ENCODE measurements at regions of chr2 and their contacts with region 1.

Region 1: DNA sequence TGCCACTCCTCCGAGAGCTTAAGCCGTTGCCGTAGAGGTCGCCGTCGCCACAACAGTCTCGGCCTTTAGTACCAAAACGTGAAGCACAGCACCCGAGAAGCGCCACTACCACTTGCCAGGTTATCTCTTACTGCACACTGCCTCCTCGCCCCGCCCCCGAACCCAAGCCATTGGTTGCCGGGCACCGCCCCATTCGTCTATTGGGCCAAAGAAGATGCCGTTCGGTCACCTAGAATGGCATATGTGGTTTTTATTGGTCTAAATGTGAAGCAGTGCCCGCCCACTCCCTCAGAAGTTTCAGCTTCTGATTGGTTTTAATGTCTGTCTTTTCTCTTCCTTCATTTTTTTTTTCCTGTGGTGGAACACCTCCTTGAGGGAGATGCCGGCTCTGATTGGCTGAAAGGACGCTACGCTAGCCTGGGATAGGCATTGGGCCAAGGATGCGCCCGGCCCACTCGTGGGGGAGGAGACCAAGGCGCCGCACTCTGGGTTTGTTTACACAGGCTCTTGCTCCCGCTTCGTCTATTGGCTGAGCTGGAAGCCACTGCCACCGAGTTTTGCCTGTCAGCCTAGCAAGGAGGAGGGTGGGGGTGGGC is at the start of gene PAIP2B:
- DNase-seq: peak; percentile 98 to 99 (median 99)
- ATAC-seq: peak; percentile 95 to 98 (median 96)
- H3K4me3 ChIP-seq: peak within 1 kb of the TSS; percentile 64 to 91 (median 82)
- H3K27ac ChIP-seq: peak within 1 kb of the TSS; percentile 85 to 97 (median 94)
- H3K4me1 ChIP-seq: peaks cover 0 to 16% (median 7%) of the 10 kb centered on the region in 12 donors
- H3K27me3 ChIP-seq: peaks cover 0 to 5% (median 0%) of the 10 kb centered on the region in 9 donors
- CTCF ChIP-seq: no peak
- POLR2A ChIP-seq: peak; percentile 76 to 88
- total RNA-seq, gene PAIP2B: 38.3 to 89.0 (median 53.2) TPM

Region 2: DNA sequence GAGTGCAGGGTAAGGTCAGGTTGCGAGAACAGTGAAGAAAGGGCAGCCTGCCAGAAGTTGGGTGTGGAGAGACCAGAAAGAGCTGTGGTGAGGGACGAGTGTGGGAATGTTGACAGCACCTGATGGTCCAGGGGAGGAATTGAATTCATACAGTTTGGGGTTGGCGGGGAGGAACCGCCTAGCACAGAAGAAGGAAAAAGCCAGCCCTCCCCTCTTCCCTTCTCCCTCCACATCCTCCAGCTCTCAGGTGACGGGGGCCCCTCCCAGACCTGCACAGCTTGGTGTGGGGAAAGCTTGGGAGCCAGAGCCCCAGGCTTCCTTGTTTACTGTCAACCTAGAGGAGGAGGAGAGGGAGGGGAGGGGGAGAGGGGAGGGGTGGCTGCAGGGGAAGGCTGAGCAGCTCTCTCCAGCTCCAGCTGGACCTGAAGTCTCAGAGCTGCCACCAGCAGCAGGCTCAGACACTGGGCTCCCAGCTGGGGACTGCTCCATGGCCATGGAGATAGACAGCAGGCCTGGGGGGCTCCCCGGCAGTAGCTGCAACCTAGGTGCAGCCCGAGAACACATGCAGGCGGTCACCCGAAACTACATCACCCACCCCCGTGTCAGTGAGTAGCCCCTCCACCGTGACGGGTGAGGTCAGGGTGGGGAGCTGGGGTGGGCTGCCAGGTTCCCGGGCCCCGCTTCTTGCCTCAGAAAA is 291.4 kb before region 1 on chr2 and contains the start of gene ATP6V1B1:
- intact Hi-C with region 1: no loop called
- DNase-seq: no peak
- ATAC-seq: peak in 1 of 4 donors; percentile 5
- H3K4me3 ChIP-seq: no peak within 1 kb of the TSS
- H3K27ac ChIP-seq: no peak within 1 kb of the TSS
- H3K4me1 ChIP-seq: no peaks in the 10 kb centered on the region
- H3K27me3 ChIP-seq: peaks cover 0 to 17% (median 4%) of the 10 kb centered on the region in 9 donors
- CTCF ChIP-seq: no peak
- POLR2A ChIP-seq: no peak
- total RNA-seq, gene ATP6V1B1: 0.16 to 0.60 (median 0.48) TPM in 5 of 9 donors, not detected in the others

Region 3: GRCh38 chr2:71243634-71244304 is 16.7 kb after region 1 on chr2:
- intact Hi-C with region 1: loop called in 1 of 10 experiments (anchors 2 kb)
- DNase-seq: peak in 4 of 5 donors; percentile 68 to 87 (median 80)
- ATAC-seq: peak; percentile 95 to 97 (median 96)
- H3K4me3 ChIP-seq: no peak overlapping the region
- H3K27ac ChIP-seq: peak overlapping the region in 10 of 12 donors; percentile 31 to 79 (median 72)
- H3K4me1 ChIP-seq: peaks cover 0 to 39% (median 7%) of the 10 kb centered on the region in 12 donors
- H3K27me3 ChIP-seq: no peaks in the 10 kb centered on the region
- CTCF ChIP-seq: no peak
- POLR2A ChIP-seq: no peak

Region 4: GRCh38 chr2:71317060-71317459 is 90.0 kb after region 1 on chr2:
- intact Hi-C with region 1: no loop called
- DNase-seq: no peak
- ATAC-seq: no peak
- H3K4me3 ChIP-seq: no peak overlapping the region
- H3K27ac ChIP-seq: no peak overlapping the region
- H3K4me1 ChIP-seq: peaks cover 0 to 4% (median 0%) of the 10 kb centered on the region in 12 donors
- H3K27me3 ChIP-seq: no peaks in the 10 kb centered on the region
- CTCF ChIP-seq: no peak
- POLR2A ChIP-seq: no peak

Region 5: DNA sequence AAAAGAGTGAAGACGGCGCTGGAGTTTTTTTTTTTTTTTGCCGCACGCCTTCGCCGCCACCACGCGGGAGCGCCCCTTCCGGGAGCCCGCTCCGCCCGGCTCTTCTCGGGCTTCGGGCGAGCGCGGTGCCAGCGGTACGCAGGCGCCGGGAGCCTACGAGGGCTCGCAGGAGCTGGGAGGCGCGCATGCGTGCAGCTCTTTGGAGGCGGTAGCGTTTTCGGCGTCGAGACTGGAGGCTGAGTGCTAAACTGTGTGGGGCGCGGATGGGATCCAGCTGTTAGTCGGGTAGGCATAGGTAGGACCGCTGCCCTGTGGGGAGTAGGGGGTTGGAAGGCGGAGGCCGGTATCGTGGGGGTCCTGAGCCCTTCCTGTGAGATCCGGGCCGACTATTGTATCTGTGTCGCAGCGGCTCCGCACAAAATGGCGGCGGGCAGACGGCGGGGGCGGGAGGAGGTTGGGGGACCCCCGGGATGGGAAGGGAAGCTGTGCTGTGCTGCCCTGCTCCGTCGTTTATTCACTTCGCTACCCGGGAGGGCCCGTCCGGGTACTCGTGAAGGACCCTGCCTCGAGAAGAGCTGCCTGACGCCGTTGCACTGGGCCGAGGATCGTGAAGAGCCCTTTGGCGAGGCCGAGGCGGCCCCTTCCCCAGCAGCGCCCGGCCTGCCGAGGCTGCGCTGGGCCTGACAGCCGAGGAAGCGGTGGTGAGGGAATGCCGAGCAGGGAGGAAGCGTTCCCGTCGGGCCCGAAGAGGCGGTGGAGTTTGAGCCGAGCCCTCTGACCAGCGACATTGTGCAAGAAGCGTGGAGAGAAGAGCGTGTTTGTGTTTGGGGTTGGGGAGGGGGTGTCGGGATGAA is 104.7 kb after region 1 on chr2 and contains the start of gene ZNF638:
- intact Hi-C with region 1: loop called in 9 of 10 experiments (anchors 1 to 10 kb)
- DNase-seq: peak; percentile 94 to 97 (median 96)
- ATAC-seq: peak; percentile 98 to 99 (median 98)
- H3K4me3 ChIP-seq: peak within 1 kb of the TSS; percentile 64 to 99 (median 91)
- H3K27ac ChIP-seq: peak within 1 kb of the TSS; percentile 72 to 96 (median 92)
- H3K4me1 ChIP-seq: peaks cover 0 to 48% (median 37%) of the 10 kb centered on the region in 12 donors
- H3K27me3 ChIP-seq: no peaks in the 10 kb centered on the region
- CTCF ChIP-seq: peak; percentile 72 to 95 (median 85)
- POLR2A ChIP-seq: peak in 1 of 2 donors; percentile 80
- total RNA-seq, gene ZNF638: 61.1 to 100 (median 84.1) TPM

Region 6: DNA sequence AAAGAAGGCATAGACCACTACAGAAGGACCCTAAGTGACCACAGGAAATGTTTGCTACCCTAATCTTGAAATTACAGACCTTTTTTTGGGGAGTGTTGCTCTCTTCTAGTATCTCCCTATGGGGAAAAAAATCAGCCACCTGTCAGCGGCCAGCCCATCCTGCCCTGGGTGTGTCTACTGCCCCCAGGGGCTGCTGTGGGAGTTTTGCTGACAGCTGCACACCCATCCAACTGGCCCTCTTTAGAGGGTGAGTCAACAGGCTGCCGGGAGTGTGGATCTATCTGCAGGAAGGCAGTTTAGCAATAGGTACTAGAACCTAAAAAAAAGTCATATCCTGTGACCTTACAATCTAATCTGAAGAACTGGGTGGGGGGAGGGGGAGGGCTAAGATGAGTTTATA is 225.5 kb after region 1 on chr2:
- intact Hi-C with region 1: loop called in 2 of 10 experiments (anchors 10 kb)
- DNase-seq: peak in 4 of 5 donors; percentile 55 to 82 (median 60)
- ATAC-seq: peak; percentile 54 to 65 (median 58)
- H3K4me3 ChIP-seq: peak overlapping the region in 7 of 12 donors; percentile 57 to 77 (median 63)
- H3K27ac ChIP-seq: peak overlapping the region; percentile 58 to 92 (median 90)
- H3K4me1 ChIP-seq: peaks cover 0 to 67% (median 57%) of the 10 kb centered on the region in 12 donors
- H3K27me3 ChIP-seq: peaks cover 0 to 12% (median 0%) of the 10 kb centered on the region in 9 donors
- CTCF ChIP-seq: peak in 6 of 12 donors; percentile 7 to 39 (median 26)
- POLR2A ChIP-seq: no peak

Region 7: DNA sequence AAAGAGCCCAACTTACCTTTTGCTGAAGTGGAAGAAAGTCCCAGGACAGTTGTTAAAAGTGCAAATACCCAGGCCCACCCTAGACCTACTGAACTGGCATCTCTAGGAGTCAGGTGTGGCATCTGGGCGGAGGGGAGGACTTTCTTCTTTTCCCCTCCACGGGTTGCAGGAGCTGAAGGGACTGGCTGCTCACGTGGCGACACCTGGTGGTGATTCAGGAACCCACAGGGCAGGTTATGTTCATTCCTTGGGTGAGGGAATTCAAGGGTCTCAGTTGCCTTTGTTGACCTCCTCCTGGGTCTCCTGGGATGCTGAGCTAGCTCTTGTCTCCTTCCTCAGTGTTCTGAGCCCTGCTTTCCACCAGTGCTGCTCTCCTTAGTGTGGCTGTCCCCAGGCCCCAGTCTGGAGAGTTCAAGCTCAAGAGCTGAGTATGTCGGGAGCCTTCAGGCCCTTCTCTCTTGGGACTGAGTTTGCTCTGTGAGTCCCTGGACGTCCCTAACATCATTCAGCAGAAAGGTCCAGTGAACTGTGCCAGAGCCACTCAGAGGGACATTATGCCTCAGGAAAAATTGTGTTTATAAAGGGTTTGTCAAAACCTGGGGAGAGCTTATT is 283.2 kb after region 1 on chr2:
- intact Hi-C with region 1: loop called in 4 of 10 experiments (anchors 2 to 5 kb)
- DNase-seq: peak in 4 of 5 donors; percentile 62 to 71 (median 66)
- ATAC-seq: peak in 3 of 4 donors; percentile 48 to 62 (median 62)
- H3K4me3 ChIP-seq: no peak overlapping the region
- H3K27ac ChIP-seq: no peak overlapping the region
- H3K4me1 ChIP-seq: peaks cover under 1 to 25% (median 10%) of the 10 kb centered on the region in 12 donors
- H3K27me3 ChIP-seq: no peaks in the 10 kb centered on the region
- CTCF ChIP-seq: peak; percentile 82 to 97 (median 91)
- POLR2A ChIP-seq: no peak

Measured in heart left ventricle (tissue), 16 donors.